ENCODE measurements at regions of chr2 and their contacts with region 1.

Region 1: GRCh38 chr2:177397481-177398289 is 5.1 kb downstream of the AGPS start:
- DNase-seq: no peak
- ATAC-seq: peak; percentile 18; the same call in 1 of the 2 replicates
- H3K4me3 ChIP-seq: peak overlapping the region in 1 of 2 experiments; percentile 20; a peak in 2 of 4 replicates
- H3K27ac ChIP-seq: peak overlapping the region; percentile 73
- H3K4me1 ChIP-seq: peaks cover 66% of the 10 kb centered on the region
- H3K27me3 ChIP-seq: no peaks in the 10 kb centered on the region
- CTCF ChIP-seq: no peak

Region 2: GRCh38 chr2:177380181-177380580 is 17.5 kb before region 1 on chr2:
- CTCF ChIA-PET with region 1: no interaction called
- POLR2A ChIA-PET with region 1: no interaction called
- in situ Hi-C with region 1: no loop called
- intact Hi-C with region 1: no loop called
- DNase-seq: no peak
- ATAC-seq: no peak
- H3K4me3 ChIP-seq: no peak overlapping the region
- H3K27ac ChIP-seq: no peak overlapping the region
- H3K4me1 ChIP-seq: no peaks in the 10 kb centered on the region
- H3K27me3 ChIP-seq: no peaks in the 10 kb centered on the region
- CTCF ChIP-seq: no peak

Region 3: DNA sequence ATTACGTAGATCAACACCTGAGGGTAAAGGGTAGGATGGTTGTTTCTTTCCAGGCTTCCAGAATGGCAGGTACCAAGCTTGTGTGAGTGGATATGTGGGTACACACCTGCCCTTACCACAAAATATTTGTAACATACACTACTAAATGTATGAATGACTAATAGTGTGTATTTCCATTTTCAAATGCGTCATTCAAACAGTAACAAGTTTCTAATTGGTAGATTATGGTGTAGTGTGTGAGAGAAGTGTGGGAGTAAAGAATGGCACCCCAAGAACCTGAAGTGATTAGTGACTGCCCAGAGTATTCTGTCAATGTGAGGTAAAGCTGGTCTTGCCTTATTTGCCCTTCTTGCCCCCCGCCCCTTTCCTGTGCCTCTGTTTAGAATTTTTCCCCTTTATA is 16.0 kb after region 1 on chr2:
- CTCF ChIA-PET with region 1: no interaction called
- POLR2A ChIA-PET with region 1: interaction called, 3 read pairs
- in situ Hi-C with region 1: no loop called
- intact Hi-C with region 1: loop called (anchors 2 kb)
- DNase-seq: no peak
- ATAC-seq: 0 out of 2 replicates have a peak, but pooled peaks have one; percentile 11
- H3K4me3 ChIP-seq: no peak overlapping the region
- H3K27ac ChIP-seq: no peak overlapping the region
- H3K4me1 ChIP-seq: peaks cover 4% of the 10 kb centered on the region; the same call in 1 of the 2 replicates
- H3K27me3 ChIP-seq: no peaks in the 10 kb centered on the region
- CTCF ChIP-seq: no peak

Region 4: DNA sequence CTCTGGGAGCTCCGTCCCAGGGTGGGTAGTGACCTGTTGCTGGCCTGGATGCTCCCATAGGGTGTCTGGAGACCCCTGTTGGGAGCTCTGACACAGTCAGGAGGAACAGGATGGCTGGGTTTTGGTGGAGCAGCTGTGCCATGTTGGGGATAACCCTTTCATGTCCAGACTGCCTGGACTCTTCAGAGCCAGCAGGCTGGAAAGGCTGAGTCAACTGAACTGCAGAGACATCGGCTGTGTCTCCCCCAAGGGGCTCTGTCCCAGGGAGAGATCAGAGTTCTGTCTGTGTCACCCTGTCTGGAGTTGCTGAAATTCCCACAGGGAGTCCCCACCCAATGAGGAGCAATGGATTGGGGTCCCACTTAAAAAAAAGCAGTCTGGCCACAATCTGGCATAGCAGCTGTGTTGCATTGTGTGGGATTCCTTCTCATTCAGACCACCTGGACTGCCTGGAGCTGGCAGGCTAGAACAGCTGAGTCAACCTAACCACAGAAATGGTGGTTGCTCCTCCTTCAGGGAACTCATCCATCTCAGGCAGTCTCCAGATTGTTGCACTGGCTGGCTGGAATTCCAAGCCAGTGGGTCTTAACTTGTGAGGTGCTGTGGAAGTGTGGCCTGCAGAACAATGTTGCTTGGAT is 32.1 kb after region 1 on chr2:
- CTCF ChIA-PET with region 1: no interaction called
- POLR2A ChIA-PET with region 1: interaction called, 23 read pairs
- in situ Hi-C with region 1: no loop called
- intact Hi-C with region 1: no loop called
- DNase-seq: no peak
- ATAC-seq: no peak
- H3K4me3 ChIP-seq: no peak overlapping the region
- H3K27ac ChIP-seq: no peak overlapping the region
- H3K4me1 ChIP-seq: no peaks in the 10 kb centered on the region
- H3K27me3 ChIP-seq: no peaks in the 10 kb centered on the region
- CTCF ChIP-seq: no peak